OCI-LY7 (cell line): ENCODE measurements at regions of chr12 and their contacts with region 1.

Region 1: DNA sequence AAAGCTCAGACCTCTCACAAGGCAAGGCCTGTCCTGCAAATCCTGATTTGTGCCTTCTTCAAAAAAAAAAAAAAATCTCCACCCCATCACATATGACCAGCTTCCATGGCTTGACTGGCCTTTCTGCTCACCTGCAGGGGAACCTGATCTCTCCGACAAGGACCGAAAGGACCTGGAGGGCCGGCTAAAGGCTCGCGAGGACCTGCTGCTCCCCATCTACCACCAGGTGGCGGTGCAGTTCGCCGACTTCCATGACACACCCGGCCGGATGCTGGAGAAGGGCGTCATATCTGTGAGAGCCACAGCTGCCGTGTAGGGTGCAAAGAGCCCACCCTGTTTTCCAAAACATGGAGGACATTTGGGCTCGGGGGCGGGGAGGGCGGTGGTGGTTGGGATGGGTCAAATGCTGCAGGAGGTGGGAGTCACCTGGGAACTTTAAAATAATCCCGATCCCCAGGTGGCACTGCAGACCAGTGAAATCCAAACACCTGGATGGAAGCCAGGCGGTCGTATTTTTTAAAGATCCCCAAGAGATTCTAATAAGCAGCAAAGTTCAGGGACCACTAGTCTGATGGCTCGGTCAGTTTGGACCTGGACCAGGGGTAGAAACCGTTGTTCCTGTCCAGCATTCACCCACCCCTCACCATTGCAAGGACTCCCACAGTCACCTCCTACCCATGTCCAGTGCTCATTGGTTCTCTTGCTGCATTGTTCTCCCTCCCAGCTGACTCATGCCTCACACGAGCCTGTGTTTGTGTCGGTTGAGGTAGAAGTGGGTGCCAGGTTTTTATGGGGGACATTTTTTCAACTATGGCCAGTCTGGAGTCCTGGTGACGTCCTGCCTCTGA is 44.8 kb downstream of the FOXN4 start:
- DNase-seq: peak; percentile 78
- H3K4me3 ChIP-seq: no peak overlapping the region
- H3K27ac ChIP-seq: no peak overlapping the region
- H3K4me1 ChIP-seq: no peaks in the 10 kb centered on the region
- CTCF ChIP-seq: peak; percentile 95

Region 2: GRCh38 chr12:108752387-108752786 is 511.9 kb before region 1 on chr12:
- CTCF ChIA-PET with region 1: interaction called, 10 read pairs
- POLR2A ChIA-PET with region 1: no interaction called
- intact Hi-C with region 1: no loop called
- DNase-seq: no peak
- H3K4me3 ChIP-seq: no peak overlapping the region
- H3K27ac ChIP-seq: no peak overlapping the region
- H3K4me1 ChIP-seq: no peaks in the 10 kb centered on the region
- CTCF ChIP-seq: no peak

Region 3: DNA sequence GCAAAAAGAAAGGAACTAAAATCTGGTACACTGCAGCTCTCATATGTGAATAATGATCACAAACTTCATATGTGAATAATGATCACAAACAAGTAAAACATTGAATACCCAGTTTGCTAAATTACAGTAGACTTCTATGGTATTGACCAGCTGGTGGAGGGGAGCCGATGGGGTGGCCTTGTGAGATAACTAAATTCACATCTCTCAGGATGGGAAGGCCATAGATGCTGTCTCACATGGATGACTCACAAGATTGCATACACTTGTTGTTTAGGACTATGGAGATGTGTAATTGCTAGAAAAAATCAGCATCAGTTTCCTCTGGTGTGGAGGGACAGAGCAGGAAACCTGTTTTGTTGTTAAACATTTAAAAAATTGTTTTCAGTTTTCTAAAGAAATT is 98.7 kb before region 1 on chr12:
- CTCF ChIA-PET with region 1: no interaction called
- POLR2A ChIA-PET with region 1: no interaction called
- intact Hi-C with region 1: no loop called
- DNase-seq: no peak
- H3K4me3 ChIP-seq: no peak overlapping the region
- H3K27ac ChIP-seq: no peak overlapping the region
- H3K4me1 ChIP-seq: no peaks in the 10 kb centered on the region
- CTCF ChIP-seq: no peak

Region 4: GRCh38 chr12:109247831-109248654 is 16.3 kb before region 1 on chr12:
- CTCF ChIA-PET with region 1: no interaction called
- POLR2A ChIA-PET with region 1: no interaction called
- intact Hi-C with region 1: no loop called
- DNase-seq: no peak
- H3K4me3 ChIP-seq: no peak overlapping the region
- H3K27ac ChIP-seq: no peak overlapping the region
- H3K4me1 ChIP-seq: no peaks in the 10 kb centered on the region
- CTCF ChIP-seq: no peak

Region 5: GRCh38 chr12:109385339-109386067 is 121.2 kb after region 1 on chr12:
- CTCF ChIA-PET with region 1: interaction called, 3 read pairs
- POLR2A ChIA-PET with region 1: interaction called, 7 read pairs
- intact Hi-C with region 1: loop called (anchors 1 kb)
- DNase-seq: peak; percentile 61
- H3K4me3 ChIP-seq: no peak overlapping the region
- H3K27ac ChIP-seq: no peak overlapping the region
- H3K4me1 ChIP-seq: peaks cover 3% of the 10 kb centered on the region
- CTCF ChIP-seq: peak; percentile 83

Region 6: DNA sequence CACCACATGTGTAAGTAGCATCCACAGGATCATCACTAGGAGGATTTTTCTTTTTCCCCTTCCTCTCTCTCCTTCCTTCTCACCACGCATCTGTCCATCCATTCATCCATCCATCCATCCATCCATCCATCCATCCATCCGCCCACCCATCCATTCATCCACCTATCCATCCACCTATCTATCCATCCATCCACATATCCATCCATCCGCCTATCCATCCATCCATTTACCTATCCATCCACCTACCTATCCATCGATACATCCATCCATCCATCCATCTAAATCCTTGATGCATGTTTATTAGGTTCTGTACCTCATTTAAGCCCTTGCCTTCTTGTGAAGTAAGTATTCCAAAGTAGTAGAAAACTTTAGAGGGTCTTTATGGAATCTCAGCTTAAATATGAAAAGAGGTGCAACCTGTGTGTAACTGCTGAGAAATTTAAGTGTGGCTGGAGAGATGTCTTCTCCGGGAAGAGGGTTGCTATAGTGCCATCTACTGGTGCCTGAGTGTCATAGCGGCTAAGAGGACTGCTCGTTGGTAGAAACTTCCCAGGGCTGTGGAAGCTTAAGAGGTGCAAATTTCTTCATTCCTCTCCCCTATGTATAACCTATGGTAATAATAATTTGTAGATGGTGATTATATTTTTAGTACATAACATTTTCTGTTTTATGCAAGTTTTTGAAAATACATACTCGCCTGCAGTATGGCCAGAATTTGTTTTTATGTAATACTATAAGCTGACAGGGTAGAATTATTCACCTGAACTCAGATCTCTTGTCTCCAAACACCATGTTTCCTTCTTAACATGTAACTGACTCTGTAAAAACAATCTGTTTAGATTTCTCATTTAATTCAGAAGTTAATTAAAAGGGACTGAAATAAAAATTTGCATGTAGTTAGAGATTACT is 129.4 kb after region 1 on chr12:
- CTCF ChIA-PET with region 1: no interaction called
- POLR2A ChIA-PET with region 1: interaction called, 7 read pairs
- intact Hi-C with region 1: loop called (anchors 2 kb)
- DNase-seq: peak; percentile 73
- H3K4me3 ChIP-seq: no peak overlapping the region
- H3K27ac ChIP-seq: no peak overlapping the region
- H3K4me1 ChIP-seq: peaks cover 3% of the 10 kb centered on the region
- CTCF ChIP-seq: peak; percentile 96

Region 7: DNA sequence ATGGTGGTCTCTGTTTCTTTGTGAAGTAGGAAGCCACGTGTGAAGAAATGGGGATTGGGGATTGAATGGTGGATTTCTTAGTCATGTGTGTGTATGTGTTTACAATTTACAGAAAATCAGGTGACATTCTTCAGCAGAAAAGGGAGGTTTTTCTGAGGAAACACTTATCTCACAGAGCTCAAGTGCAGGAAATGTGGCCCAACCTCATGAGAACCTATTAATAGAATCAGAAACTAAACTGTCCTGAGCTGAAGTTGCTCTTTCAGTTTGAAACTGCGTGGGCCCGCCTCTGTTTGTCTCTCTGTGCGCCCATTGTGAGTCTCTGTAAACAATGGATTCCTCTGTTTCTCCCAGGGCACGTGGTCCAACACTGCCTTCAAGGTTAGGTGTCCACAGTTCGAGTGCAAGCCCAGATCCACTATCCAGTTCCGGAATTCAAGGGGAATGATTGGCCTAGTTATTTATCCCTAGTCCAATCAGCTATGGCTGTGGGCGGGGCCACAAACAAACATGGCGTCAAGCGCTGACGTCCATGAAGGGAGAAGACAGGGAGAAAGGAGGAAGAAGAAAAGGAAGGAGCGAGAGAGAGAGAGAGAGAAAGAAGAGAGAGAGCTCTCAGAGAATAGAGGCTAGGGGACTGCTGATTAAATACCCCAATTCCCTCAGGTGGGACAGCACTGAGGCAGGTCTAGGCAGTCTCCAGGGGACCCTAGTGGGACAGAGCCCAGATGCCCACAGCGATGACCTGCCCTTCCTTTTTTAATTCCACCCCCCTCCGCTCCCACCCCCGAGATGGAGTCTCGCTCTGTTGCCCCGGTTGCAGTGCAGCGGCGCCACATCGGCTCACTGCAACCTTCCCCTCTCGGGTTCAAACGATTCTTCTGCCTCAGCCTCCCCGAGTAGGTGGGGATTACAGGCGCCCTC is 815.4 kb after region 1 on chr12:
- CTCF ChIA-PET with region 1: no interaction called
- POLR2A ChIA-PET with region 1: no interaction called
- intact Hi-C with region 1: no loop called
- DNase-seq: peak; percentile 81
- H3K4me3 ChIP-seq: peak overlapping the region; percentile 50
- H3K27ac ChIP-seq: peak overlapping the region; percentile 61
- H3K4me1 ChIP-seq: peaks cover 16% of the 10 kb centered on the region
- CTCF ChIP-seq: no peak